ENCODE measurements at regions of chr11 and their contacts with region 1.

Region 1: DNA sequence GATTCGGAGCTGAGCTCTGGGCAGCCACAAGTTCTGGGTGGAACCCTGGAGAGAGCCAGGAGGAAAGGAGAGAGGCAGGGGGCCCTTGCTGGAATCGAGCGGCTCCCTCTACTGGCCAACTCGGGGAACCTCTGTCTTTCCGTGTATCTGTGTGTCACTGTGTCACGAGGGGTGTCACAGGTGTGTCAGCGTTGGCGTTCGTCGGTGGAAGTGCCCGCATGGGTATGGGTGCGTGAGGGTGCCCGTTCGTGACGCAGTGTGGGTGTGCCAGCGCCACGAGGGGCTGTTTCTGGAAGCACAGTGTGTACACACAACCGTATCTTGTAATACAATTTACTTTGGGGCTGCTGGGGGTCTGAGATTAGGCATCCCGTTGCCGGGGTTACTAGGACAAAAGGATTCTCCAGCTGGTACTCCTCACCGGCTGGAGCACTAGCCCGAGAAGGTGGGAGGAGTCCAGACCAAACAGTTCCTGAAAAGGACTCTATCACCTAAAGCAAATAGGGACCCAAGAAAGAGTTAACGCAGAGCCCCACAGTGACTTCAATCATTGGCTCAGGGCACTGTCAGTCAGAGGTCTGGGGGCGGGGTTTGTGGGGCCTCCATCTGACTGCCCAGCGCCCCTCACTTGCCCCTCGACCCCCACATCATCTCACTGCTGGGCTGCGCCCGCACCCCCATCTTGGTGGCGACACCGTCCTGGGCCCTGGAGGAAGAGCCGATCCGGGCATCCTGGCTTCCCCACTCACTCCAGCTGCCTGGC is 2.6 kb upstream of the BCL9L start:
- DNase-seq: peak; percentile 95
- ATAC-seq: peak; percentile 51
- H3K4me3 Mint-ChIP-seq: peak overlapping the region; percentile 86
- H3K27ac Mint-ChIP-seq: peak overlapping the region; percentile 97
- H3K4me1 Mint-ChIP-seq: peaks cover 42% of the 10 kb centered on the region
- H3K27me3 Mint-ChIP-seq: no peaks in the 10 kb centered on the region

Region 2: GRCh38 chr11:118227865-118228785 is 700.2 kb before region 1 on chr11:
- CTCF ChIA-PET with region 1: no interaction called
- POLR2A ChIA-PET with region 1: no interaction called
- intact Hi-C with region 1: loop called in 1 of 2 experiments (anchors 5 kb)
- DNase-seq: no peak
- ATAC-seq: no peak
- H3K4me3 Mint-ChIP-seq: peak overlapping the region; percentile 15
- H3K27ac Mint-ChIP-seq: no peak overlapping the region
- H3K4me1 Mint-ChIP-seq: peaks cover 49% of the 10 kb centered on the region
- H3K27me3 Mint-ChIP-seq: no peaks in the 10 kb centered on the region

Region 3: GRCh38 chr11:118435893-118436624 is 492.2 kb before region 1 on chr11 and contains the start of gene KMT2A:
- CTCF ChIA-PET with region 1: no interaction called
- POLR2A ChIA-PET with region 1: no interaction called
- intact Hi-C with region 1: loop called (anchors 5 kb)
- DNase-seq: peak; percentile 96
- ATAC-seq: peak; percentile 41
- H3K4me3 Mint-ChIP-seq: peak within 1 kb of the TSS; percentile 94
- H3K27ac Mint-ChIP-seq: peak within 1 kb of the TSS; percentile 94
- H3K4me1 Mint-ChIP-seq: peaks cover 37% of the 10 kb centered on the region
- H3K27me3 Mint-ChIP-seq: no peaks in the 10 kb centered on the region
- total RNA-seq, gene KMT2A: 64.1 to 67.1 TPM

Region 4: DNA sequence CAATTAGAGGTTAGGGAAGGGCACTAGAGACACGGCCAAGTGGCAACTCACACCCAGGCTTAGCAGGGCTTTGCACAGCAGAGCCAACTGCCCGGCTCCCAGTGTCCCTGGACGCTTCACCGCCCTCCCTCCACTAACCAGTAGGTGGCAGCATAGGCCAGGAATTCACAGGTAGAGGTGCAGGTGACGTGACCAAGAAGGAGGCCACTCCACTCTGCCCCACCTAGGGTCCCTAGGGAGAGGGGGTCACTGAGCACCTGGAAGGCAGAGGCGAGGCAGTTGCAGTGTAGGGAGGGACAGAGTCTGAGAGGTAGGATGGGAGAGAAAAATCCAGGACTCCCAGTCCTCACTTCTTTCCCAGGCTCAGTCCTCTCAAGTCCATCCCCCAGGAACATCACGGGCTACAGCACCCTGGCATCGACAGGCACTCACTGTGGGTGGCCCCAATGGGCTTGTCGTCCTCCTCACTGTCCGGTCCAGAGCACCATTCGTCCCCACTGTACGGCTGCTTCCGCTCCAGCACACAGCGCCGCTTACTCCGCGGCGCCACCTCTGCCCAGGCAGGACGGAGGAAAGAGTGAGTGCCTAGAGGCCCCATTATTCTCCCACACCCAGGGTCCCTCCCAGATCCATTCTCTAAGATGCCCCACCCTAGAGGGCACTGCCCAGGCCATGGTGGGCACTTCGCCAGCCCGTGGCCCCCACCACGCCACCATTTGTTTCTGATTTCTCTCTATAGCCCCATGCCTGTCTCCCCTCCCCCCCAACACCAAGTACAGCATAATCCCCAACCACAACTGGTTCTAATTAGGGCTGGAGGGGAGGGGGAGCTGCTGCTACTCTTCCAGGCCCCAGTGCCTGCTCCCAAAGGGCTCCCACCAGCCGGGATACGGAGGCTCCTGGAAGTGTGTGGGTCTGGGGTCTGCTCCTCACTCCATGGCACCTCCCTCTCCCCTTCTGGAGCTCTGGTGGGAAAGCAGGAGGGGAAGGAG is 20.9 kb before region 1 on chr11:
- CTCF ChIA-PET with region 1: interaction called, 96 read pairs
- POLR2A ChIA-PET with region 1: interaction called, 26 read pairs
- intact Hi-C with region 1: loop called (anchors 1 kb)
- DNase-seq: peak; percentile 92
- ATAC-seq: peak; percentile 66
- H3K4me3 Mint-ChIP-seq: no peak overlapping the region
- H3K27ac Mint-ChIP-seq: peak overlapping the region; percentile 67
- H3K4me1 Mint-ChIP-seq: peaks cover 48% of the 10 kb centered on the region
- H3K27me3 Mint-ChIP-seq: no peaks in the 10 kb centered on the region

Region 5: DNA sequence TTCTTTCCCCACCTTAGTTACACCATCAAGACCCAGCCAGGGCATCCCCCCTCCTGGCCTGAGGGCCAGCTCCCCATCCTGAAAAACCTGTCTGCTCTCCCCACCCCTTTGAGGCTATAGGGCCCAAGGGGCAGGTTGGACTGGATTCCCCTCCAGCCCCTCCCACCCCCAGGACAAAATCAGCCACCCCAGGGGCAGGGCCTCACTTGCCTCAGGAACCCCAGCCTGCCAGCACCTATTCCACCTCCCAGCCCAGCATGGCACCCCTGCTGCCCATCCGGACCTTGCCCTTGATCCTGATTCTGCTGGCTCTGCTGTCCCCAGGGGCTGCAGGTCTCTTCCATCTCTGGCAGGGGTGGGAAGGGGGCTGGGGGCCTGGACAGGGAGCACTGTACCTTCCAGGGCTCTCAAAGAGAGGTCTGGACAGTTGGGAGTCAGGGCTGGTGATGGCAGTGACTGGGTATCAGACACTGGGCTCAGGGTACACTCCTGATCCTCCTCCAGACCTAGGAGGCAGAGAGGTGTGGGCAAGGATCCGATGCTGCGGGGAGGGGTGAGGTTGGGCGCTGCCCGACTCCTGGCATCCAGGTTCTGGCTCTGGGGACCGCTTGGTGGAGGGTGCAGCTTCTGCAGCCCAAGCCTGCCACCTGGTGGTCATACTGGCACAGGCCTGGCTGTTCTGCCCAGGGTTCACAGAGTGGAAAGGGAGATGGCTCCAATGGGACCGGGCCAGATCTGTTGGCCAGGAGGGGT is 28.0 kb after region 1 on chr11 and contains the start of gene UPK2:
- CTCF ChIA-PET with region 1: interaction called, 8 read pairs
- POLR2A ChIA-PET with region 1: no interaction called
- intact Hi-C with region 1: loop called in 1 of 2 experiments (anchors 1 kb)
- DNase-seq: peak; percentile 95
- ATAC-seq: peak; percentile 100
- H3K4me3 Mint-ChIP-seq: no peak within 1 kb of the TSS
- H3K27ac Mint-ChIP-seq: peak within 1 kb of the TSS; percentile 0
- H3K4me1 Mint-ChIP-seq: peaks cover 5% of the 10 kb centered on the region
- H3K27me3 Mint-ChIP-seq: no peaks in the 10 kb centered on the region
- total RNA-seq, gene UPK2: 0.19 to 0.32 TPM

Region 6: GRCh38 chr11:119030329-119031049 is 102.2 kb after region 1 on chr11 and contains the start of gene SLC37A4:
- CTCF ChIA-PET with region 1: interaction called, 3 read pairs
- POLR2A ChIA-PET with region 1: no interaction called
- intact Hi-C with region 1: loop called in 1 of 2 experiments (anchors 1 kb)
- DNase-seq: peak; percentile 99
- ATAC-seq: peak; percentile 94
- H3K4me3 Mint-ChIP-seq: peak within 1 kb of the TSS; percentile 76
- H3K27ac Mint-ChIP-seq: peak within 1 kb of the TSS; percentile 86
- H3K4me1 Mint-ChIP-seq: peaks cover 19% of the 10 kb centered on the region
- H3K27me3 Mint-ChIP-seq: no peaks in the 10 kb centered on the region
- total RNA-seq, gene SLC37A4: 26.2 to 36.2 TPM

Region 7: DNA sequence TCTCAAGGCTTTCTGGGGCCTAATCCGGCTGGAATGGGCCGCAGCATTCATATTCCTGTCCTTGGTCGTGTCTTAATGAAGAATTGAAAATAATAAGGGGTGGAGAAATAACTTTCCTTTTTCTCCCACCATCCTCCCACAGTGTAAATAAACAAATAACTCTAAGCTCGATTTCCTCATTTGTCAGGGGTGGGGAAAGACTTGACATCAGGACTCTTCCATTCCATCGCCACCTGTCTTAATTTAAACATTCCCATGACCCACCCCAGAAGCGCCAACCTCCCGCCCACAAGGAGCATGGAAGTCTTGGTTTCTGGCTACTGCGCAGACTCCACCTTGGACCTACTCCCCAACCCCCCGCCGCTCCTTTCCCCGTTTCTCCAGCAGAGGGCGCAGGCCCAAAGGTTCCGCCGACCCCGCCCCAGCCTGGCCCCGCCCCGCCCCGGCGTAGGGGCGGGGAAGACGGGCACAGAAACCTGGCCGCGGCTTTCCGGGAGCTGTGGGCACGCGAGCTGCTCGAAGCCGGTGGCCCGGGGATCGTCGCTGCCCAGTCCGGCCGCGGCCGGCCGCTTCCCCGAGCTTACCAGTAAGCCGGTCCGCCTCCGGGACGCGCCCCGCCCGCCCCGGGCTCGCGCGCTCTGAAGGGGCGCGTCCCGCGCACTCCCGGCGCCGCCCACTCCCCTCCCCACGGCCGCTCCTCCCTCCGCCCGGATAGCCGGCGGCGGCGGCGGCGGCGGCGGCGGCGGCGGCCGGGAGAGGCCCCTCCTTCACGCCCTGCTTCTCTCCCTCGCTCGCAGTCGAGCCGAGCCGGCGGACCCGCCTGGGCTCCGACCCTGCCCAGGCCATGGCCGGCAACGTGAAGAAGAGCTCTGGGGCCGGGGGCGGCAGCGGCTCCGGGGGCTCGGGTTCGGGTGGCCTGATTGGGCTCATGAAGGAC is 277.6 kb after region 1 on chr11 and contains the start of gene CBL:
- CTCF ChIA-PET with region 1: no interaction called
- POLR2A ChIA-PET with region 1: no interaction called
- intact Hi-C with region 1: loop called in 1 of 2 experiments (anchors 1 kb)
- DNase-seq: peak; percentile 99
- ATAC-seq: peak; percentile 85
- H3K4me3 Mint-ChIP-seq: peak within 1 kb of the TSS; percentile 98
- H3K27ac Mint-ChIP-seq: peak within 1 kb of the TSS; percentile 94
- H3K4me1 Mint-ChIP-seq: peaks cover 27% of the 10 kb centered on the region
- H3K27me3 Mint-ChIP-seq: no peaks in the 10 kb centered on the region
- total RNA-seq, gene CBL: 29.3 to 33.2 TPM